ENCODE measurements at regions of chr2 and their contacts with region 1.

Region 1: GRCh38 chr2:173059927-173060565 is 15.6 kb upstream of the MAP3K20 start:
- ATAC-seq: peak in 2 of 8 experiments; percentile 29 to 30
- H3K4me3 ChIP-seq: no peak overlapping the region
- H3K27ac ChIP-seq: no peak overlapping the region
- H3K4me1 ChIP-seq: no peaks in the 10 kb centered on the region

Region 2: DNA sequence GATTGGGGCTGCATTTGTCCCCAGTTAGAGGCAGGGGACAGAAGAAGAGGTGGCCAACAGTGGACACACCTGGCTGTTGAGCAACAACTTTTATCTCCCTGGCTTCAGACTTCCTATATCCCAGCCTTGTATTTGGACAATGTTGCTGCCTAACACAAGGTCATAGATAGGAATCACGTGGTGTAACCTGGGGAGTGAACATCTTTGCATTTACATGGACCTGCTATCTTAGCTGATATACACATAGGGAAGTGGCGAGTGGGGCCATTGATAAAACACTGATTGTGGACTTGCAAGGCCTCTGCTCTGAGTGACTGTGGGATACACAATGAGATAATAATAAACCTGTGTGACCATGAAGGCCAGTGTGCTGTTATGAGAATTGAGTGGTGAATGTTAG is 297.5 kb before region 1 on chr2:
- in situ Hi-C with region 1: no loop called
- ATAC-seq: no peak
- H3K4me3 ChIP-seq: no peak overlapping the region
- H3K27ac ChIP-seq: no peak overlapping the region
- H3K4me1 ChIP-seq: no peaks in the 10 kb centered on the region

Region 3: GRCh38 chr2:173354601-173355131 is 294.6 kb after region 1 on chr2 and contains the start of gene CDCA7:
- in situ Hi-C with region 1: loop called in 1 of 9 experiments (anchors 25 kb)
- ATAC-seq: peak; percentile 69 to 93 (median 90)
- H3K4me3 ChIP-seq: peak within 1 kb of the TSS; percentile 50 to 70 (median 52)
- H3K27ac ChIP-seq: peak within 1 kb of the TSS; percentile 88 to 99
- H3K4me1 ChIP-seq: peaks cover 0 to 7% of the 10 kb centered on the region in 2 donors
- total RNA-seq, gene CDCA7: 0.20 to 27.5 (median 6.5) TPM

Measured in motor neuron (in vitro differentiated cells).